Left lung (tissue), 14 donors: ENCODE measurements at regions of chr3 and their contacts with region 1.

Region 1: DNA sequence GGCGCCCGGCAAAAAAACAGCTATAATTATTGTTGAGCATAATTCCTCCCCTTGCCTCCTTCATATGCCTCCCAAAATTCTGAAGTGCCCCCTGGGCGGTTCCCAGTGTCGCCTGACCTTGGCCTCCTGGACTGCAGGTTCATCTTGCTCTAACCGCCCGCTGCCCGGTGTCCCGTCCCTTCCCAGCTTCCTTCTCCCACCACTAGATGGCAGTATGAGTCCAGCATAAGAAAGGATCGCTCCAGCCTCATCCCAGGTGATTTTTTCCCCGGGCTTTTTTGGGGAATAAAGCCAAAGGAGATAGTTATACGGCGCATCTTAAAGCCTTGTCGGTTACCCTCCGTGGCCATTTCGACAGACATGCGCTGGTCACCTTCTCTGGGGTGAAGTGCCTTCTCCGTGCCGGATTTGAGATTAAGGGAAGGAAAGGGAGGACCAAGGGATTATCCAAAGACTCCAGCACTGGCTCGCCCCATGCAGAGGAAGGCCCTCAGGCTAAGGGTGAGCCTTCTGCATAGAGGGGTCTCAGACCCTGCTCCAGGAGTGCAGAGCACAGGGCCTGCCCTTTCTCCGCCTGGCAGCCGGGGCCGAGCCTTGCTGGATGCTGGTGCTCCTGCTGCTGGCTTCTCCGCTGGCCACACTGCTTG is 45.8 kb upstream of the TRA2B start:
- DNase-seq: peak in 3 of 4 donors; percentile 61 to 84 (median 79)
- ATAC-seq: peak; percentile 99
- H3K4me3 ChIP-seq: no peak overlapping the region
- H3K27ac ChIP-seq: no peak overlapping the region
- H3K4me1 ChIP-seq: peaks cover 4 to 9% of the 10 kb centered on the region in 2 donors
- H3K27me3 ChIP-seq: peaks cover 0 to 18% of the 10 kb centered on the region in 2 donors
- CTCF ChIP-seq: peak; percentile 84 to 97

Region 2: GRCh38 chr3:186277268-186277909 is 293.8 kb after region 1 on chr3:
- intact Hi-C with region 1: loop called in 1 of 2 experiments (anchors 5 kb)
- DNase-seq: peak in 2 of 4 donors; percentile 42 to 77
- ATAC-seq: peak; percentile 89
- H3K4me3 ChIP-seq: no peak overlapping the region
- H3K27ac ChIP-seq: no peak overlapping the region
- H3K4me1 ChIP-seq: no peaks in the 10 kb centered on the region
- H3K27me3 ChIP-seq: no peaks in the 10 kb centered on the region
- CTCF ChIP-seq: peak; percentile 39 to 41

Region 3: GRCh38 chr3:186534113-186534669 is 550.6 kb after region 1 on chr3:
- intact Hi-C with region 1: loop called in 1 of 2 experiments (anchors 10 kb)
- DNase-seq: no peak
- ATAC-seq: peak; percentile 64
- H3K4me3 ChIP-seq: no peak overlapping the region
- H3K27ac ChIP-seq: no peak overlapping the region
- H3K4me1 ChIP-seq: no peaks in the 10 kb centered on the region
- H3K27me3 ChIP-seq: no peaks in the 10 kb centered on the region
- CTCF ChIP-seq: no peak